Posterior cingulate gyrus (tissue), 11 donors: ENCODE measurements at regions of chrX and their contacts with region 1.

Region 1: GRCh38 chrX:45186643-45187026 is 14.0 kb downstream of the DIPK2B start:
- DNase-seq: no peak

Region 2: GRCh38 chrX:45143455-45143854 is 43.2 kb before region 1 on chrX:
- intact Hi-C with region 1: loop called (anchors 1 kb)
- DNase-seq: peak in 8 of 10 donors; percentile 26 to 95 (median 67)